ENCODE measurements at regions of chr14 and their contacts with region 1.

Region 1: DNA sequence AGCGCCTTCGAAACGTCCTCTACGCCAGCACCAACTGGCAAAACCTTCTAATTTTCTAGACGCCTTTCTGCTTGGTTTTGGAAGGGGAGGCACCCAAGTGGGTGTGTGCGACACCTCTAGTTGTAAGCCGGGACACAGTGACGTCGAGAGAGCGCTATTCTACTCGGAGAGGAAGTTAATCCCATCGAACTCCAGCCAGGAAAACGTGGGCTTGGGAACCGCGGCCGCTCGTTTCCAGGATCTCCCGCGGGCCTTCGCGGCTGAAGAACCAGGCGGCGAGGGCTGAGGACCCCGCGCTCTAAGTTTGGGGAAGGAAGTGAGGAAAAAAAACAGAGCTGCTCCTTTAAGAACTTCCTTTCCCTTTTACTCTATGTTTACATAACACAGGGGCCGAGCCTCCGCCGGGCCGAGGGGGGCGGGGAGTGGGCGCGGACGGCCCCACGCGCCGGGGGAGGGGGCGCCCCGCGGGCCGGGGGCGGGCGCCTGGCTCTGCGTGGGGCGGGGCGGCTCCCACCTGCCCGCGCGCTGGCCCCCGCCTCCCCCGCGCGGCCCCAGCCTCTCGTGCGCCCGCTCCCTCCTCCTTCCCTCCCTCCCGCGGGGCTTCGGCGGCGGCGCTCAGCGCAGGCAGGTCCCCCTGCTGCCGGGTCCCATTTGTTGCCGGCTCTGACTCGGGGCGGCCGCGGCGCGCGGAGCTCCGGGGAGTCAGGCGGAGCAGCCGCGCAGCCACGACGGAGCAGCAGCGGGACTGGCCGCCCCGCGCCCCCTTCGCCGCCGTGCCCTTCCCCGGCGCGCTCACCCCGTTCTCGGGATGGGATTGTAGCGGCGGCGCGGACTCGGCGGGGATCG is at the start of gene PELI2:
- DNase-seq: peak in 41 of 42 donors; percentile 53 to 90 (median 79)

Region 2: DNA sequence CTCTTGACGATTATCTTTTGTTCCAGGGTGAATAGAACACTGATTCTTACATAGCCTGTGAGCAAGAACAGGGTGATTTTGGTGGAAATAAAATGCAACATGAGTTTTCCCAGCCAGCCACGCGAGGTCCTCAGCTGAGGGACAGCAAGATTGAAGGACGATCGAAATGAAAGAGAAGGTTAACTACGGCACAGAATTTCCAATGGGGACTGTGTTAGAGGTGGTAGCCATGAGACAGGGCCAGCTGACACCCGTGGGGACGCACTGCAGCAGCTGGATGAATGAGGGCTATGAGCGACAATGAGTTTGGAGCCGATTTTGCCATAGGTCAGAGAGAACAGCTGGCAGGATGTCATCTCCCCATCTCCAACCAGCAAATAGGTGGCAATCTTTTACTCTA is 243.2 kb before region 1 on chr14:
- intact Hi-C with region 1: loop called (anchors 5 kb)
- DNase-seq: peak in 20 of 42 donors; percentile 8 to 64 (median 36)

Region 3: DNA sequence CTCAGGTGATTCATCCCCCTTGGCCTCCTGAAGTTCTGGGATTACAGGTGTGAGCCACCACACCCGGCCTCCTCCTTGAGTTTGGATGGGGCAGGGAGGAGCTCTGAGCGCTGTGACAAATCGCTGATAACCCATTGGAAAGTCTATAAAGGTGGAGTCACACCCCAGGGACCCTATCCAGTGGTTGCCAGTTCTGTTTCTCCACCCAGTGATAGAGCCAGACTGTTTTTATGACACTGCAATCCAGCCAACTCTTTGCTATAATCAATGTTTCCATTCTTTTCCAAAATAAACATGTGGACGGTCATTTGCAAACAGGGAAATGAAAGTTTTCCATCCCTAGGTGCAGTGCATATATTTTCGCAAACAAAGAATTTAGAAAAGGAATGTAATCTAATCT is 141.8 kb before region 1 on chr14:
- intact Hi-C with region 1: no loop called
- DNase-seq: no peak

Region 4: DNA sequence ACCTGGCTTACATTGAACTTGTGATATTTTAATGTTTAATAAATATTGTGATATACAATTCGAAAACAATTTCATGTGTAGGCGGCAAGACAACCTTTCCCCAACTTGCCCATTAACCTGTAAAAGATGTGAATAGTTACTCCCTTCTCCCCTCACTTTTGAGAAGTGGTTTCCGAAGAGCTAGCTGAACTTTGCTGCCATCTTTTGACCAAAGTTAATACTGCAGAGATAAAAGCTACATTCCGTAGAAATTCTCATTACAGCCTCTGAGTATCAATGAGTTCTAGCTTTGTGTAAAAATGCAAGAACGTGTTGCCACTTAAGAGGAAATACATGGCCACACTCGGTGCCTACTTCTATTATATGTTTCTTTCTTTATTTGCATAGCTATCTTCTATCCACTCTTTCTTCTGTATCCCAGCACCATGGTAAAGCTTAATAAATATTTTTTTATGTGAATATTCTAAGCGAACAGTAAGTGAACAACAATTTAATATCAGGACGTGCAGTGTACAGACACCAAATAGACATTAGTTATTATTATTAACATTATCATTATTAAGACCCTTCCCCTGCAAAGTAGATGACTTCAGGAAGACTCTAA is 356.5 kb after region 1 on chr14:
- intact Hi-C with region 1: no loop called
- DNase-seq: peak in 2 of 42 donors; percentile 11 to 60

Measured in head of caudate nucleus (tissue), 42 donors.